Aorta (tissue), 5 donors: ENCODE measurements at regions of chr22 and their contacts with region 1.

Region 1: GRCh38 chr22:23128269-23129108 is 13.3 kb downstream of the RSPH14 start:
- DNase-seq: peak; percentile 79 to 89
- ATAC-seq: peak; percentile 84
- H3K4me3 ChIP-seq: no peak overlapping the region
- H3K27ac ChIP-seq: no peak overlapping the region
- H3K4me1 ChIP-seq: no peaks in the 10 kb centered on the region
- H3K27me3 ChIP-seq: no peaks in the 10 kb centered on the region

Region 2: GRCh38 chr22:22848364-22848866 is 280.1 kb before region 1 on chr22:
- intact Hi-C with region 1: loop called (anchors 5 to 10 kb)
- DNase-seq: peak; percentile 64 to 82
- ATAC-seq: peak; percentile 56
- H3K4me3 ChIP-seq: no peak overlapping the region
- H3K27ac ChIP-seq: no peak overlapping the region
- H3K4me1 ChIP-seq: no peaks in the 10 kb centered on the region
- H3K27me3 ChIP-seq: no peaks in the 10 kb centered on the region

Region 3: DNA sequence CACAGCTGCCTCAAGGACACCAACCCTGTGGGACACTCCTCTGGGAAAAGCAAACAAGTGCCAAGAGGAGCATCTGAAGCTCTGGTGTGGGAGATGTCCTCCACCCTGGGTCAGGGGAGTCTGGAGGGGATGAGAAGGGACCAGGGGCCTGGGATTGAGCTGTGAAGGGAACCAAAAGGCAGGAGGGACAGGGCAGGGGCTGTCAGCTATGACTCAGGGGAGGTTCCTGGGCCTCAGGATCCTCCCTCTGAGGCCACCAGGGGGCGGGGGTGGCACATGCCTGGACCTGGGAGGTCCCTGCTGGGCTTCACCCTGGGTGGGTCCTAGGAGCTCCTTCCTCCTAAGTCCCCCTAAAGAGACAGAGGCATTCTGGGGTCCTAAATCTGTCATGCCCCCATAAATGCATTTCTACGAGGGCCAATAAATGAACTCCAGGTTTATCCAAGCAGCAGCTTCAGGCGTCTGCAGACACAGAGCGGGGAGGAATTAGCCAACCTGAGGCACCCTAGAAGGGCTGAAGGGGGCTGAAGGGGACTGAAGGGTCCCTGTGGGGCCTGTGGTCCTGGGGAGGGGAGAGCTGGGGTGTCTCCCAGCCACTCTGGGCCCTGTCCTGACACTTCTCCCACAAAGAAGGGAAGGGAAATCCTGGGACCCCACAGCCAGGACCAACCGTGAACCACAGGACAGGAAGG is 272.7 kb before region 1 on chr22:
- intact Hi-C with region 1: loop called in 1 of 2 experiments (anchors 10 kb)
- DNase-seq: no peak
- ATAC-seq: no peak
- H3K4me3 ChIP-seq: no peak overlapping the region
- H3K27ac ChIP-seq: no peak overlapping the region
- H3K4me1 ChIP-seq: no peaks in the 10 kb centered on the region
- H3K27me3 ChIP-seq: no peaks in the 10 kb centered on the region

Region 4: DNA sequence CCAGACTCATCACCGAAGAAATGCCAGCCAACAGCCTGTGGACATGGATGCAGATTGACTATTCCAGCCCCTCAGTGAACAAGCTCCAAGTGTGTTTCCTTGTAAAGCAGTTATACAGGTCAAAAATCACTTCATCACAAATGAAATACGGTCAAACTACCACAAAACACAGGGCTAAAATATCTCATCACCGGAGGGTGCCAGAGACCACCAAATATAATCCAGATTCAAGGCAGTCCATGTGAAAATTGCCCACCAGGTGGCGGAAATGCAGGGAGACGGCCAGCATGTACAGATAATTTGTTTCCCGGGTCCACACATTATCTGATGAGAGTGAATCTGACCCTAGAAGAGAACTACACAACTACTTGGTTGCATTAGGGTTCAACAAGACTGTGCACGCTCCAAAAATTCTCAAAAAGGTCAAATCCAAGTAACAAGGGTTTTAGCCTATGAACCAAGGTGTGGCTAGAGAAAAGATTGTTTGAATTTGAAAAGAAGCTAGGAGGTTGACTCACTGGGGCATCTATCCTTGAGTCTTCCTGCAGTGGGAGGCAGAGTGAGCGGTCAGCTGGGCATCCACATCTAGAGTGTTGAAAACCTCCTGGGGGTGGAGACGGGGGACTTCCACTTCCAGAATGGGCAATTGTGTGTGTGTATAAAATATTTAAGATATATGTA is 169.2 kb before region 1 on chr22:
- intact Hi-C with region 1: loop called (anchors 1 kb)
- DNase-seq: peak; percentile 78 to 86
- ATAC-seq: no peak
- H3K4me3 ChIP-seq: no peak overlapping the region
- H3K27ac ChIP-seq: no peak overlapping the region
- H3K4me1 ChIP-seq: no peaks in the 10 kb centered on the region
- H3K27me3 ChIP-seq: no peaks in the 10 kb centered on the region

Region 5: GRCh38 chr22:22999523-22999922 is 129.0 kb before region 1 on chr22:
- intact Hi-C with region 1: no loop called
- DNase-seq: no peak
- ATAC-seq: no peak
- H3K4me3 ChIP-seq: no peak overlapping the region
- H3K27ac ChIP-seq: no peak overlapping the region
- H3K4me1 ChIP-seq: no peaks in the 10 kb centered on the region
- H3K27me3 ChIP-seq: no peaks in the 10 kb centered on the region

Region 6: DNA sequence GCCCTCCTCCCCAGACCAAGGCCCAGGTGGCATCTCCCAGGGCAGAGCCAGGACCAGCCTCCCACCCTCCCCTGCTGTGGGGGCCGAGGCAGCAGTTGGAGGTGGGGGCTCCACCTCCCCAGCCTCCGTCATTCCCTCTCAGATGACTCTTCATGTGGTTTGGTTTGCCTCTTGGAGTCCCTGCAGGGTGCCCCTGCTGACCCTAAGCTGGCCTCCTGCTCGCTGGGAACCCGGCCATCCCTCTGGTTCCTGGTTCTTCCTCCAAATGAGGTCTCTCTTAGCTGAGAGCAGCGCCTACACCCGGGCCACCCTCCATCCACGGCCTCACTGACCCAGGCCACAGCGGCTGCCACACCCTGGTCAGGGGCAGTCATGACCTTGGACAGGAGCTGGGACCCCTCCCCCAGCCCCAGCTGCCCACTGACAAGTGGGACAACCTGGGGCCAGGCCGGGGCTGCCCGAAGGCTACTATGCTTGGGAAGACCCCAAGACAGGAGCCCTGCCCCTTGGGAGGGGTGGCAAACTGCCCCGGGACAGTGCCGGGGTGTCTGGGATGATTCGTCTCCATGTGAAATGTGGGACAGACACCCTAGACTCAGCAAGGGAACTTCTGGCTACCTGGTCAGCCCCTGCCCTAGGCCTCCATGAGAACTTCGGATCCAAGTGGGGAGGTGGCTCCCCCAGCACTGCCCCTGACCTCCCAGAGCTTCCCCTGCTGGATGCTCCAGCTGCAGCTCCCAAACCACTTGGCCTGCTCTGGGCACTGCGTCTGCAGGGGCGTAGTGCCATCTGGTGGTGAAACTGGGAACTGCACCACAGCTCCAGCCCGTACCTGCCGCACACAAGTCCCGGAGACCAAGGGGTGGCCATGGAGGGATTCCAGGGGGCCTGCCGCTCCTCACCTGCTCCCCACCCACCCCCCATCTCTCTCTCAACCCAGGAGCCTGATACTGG is 257.1 kb after region 1 on chr22:
- intact Hi-C with region 1: loop called in 1 of 2 experiments (anchors 5 kb)
- DNase-seq: peak; percentile 86 to 94
- ATAC-seq: peak; percentile 88
- H3K4me3 ChIP-seq: no peak overlapping the region
- H3K27ac ChIP-seq: no peak overlapping the region
- H3K4me1 ChIP-seq: no peaks in the 10 kb centered on the region
- H3K27me3 ChIP-seq: no peaks in the 10 kb centered on the region